PC-3 (cell line): ENCODE measurements at regions of chr7 and their contacts with region 1.

Region 1: DNA sequence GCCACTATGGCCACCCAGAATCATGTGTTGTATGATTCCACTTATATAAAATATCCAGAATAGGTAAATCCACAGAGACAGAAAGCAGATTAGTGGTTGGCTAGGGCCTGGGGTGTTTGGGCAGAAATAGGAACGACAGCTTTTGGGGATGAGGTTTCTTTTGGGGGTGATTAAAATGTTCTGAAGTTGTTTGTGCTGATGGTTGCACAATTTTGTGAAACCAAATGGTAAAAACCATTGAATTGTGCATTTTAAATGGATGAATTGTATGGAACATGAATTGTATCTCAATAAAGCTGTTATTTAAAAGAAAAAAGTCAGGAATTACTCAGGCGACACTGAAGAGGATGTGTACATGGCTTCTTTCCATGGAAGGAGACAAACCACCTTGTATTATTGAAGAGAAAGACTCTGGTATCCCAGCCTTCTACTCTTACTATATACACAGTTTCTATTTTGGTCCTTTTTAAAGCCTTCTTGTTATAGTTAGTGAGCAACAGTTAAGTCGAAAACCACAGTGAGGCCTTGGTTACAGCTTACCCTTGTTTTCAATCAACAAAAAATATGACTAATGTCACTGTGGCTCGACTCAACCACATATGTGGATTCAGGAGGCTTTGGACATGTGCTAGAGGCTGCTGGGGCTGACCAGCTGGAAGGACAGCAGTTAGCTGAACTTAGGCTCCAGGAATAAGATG is 57.1 kb upstream of the KMT2E start:
- DNase-seq: peak; percentile 84
- ATAC-seq: peak; percentile 95
- H3K4me3 ChIP-seq: no peak overlapping the region
- H3K27ac ChIP-seq: peak overlapping the region; percentile 89
- H3K4me1 ChIP-seq: peaks cover 14% of the 10 kb centered on the region
- H3K27me3 ChIP-seq: no peaks in the 10 kb centered on the region
- CTCF ChIP-seq: no peak

Region 2: GRCh38 chr7:104945599-104945956 is 11.3 kb before region 1 on chr7:
- CTCF ChIA-PET with region 1: no interaction called
- POLR2A ChIA-PET with region 1: no interaction called
- intact Hi-C with region 1: loop called (anchors 1 kb)
- DNase-seq: no peak
- ATAC-seq: no peak
- H3K4me3 ChIP-seq: peak overlapping the region; percentile 32; the same call in 1 of the 2 replicates
- H3K27ac ChIP-seq: peak overlapping the region; percentile 100
- H3K4me1 ChIP-seq: peaks cover 18% of the 10 kb centered on the region
- H3K27me3 ChIP-seq: no peaks in the 10 kb centered on the region
- CTCF ChIP-seq: no peak